ENCODE measurements at regions of chr9 and their contacts with region 1.

Region 1: DNA sequence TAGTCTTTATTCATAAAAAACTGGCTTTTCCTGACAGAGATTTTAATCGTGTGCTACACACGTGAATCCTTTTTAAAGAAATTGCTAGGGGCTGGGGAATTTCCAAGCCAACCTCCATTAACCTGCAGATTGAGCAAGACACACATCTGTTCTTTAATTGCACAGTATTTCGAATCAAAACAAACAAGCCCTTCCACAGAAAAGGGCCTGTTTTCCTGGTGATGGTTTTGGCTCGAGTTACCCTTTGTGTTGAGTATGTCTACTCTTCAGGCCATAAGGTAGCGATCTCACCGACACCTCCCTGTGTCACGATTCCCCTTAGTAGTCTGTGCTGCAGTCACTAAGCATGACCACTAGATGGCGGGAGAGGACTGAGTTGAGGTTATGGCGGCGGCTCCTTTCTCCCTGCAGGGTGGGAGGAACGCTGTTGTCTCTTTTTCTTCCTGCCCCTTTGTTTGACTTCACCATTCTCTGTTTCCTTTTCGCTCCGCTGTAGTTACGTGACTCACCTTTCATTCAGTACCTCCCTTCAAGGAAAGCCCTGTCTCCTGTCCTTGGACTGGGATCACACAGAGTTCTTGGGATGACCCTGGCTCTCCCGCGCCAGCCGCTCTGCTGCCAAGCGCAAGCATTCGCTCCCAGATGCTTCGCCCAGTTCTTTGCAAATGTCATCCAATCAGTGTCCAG is 137.1 kb upstream of the SLC24A2 start:
- DNase-seq: peak; percentile 80
- H3K4me3 Mint-ChIP-seq: peak overlapping the region; percentile 60
- H3K27ac Mint-ChIP-seq: no peak overlapping the region
- H3K4me1 Mint-ChIP-seq: no peaks in the 10 kb centered on the region
- H3K27me3 Mint-ChIP-seq: peaks cover 24% of the 10 kb centered on the region
- CTCF ChIP-seq: peak; percentile 95

Region 2: GRCh38 chr9:19493174-19493811 is 432.7 kb before region 1 on chr9:
- CTCF ChIA-PET with region 1: interaction called, 11 read pairs
- POLR2A ChIA-PET with region 1: interaction called, 3 read pairs
- intact Hi-C with region 1: loop called (anchors 1 kb)
- DNase-seq: peak; percentile 67
- H3K4me3 Mint-ChIP-seq: peak overlapping the region; percentile 72
- H3K27ac Mint-ChIP-seq: no peak overlapping the region
- H3K4me1 Mint-ChIP-seq: peaks cover 16% of the 10 kb centered on the region
- H3K27me3 Mint-ChIP-seq: peaks cover 19% of the 10 kb centered on the region
- CTCF ChIP-seq: peak; percentile 81

Region 3: GRCh38 chr9:20043035-20043434 is 117.1 kb after region 1 on chr9:
- CTCF ChIA-PET with region 1: no interaction called
- POLR2A ChIA-PET with region 1: no interaction called
- intact Hi-C with region 1: no loop called
- DNase-seq: no peak
- H3K4me3 Mint-ChIP-seq: no peak overlapping the region
- H3K27ac Mint-ChIP-seq: no peak overlapping the region
- H3K4me1 Mint-ChIP-seq: peaks cover 5% of the 10 kb centered on the region
- H3K27me3 Mint-ChIP-seq: no peaks in the 10 kb centered on the region
- CTCF ChIP-seq: no peak

Region 4: DNA sequence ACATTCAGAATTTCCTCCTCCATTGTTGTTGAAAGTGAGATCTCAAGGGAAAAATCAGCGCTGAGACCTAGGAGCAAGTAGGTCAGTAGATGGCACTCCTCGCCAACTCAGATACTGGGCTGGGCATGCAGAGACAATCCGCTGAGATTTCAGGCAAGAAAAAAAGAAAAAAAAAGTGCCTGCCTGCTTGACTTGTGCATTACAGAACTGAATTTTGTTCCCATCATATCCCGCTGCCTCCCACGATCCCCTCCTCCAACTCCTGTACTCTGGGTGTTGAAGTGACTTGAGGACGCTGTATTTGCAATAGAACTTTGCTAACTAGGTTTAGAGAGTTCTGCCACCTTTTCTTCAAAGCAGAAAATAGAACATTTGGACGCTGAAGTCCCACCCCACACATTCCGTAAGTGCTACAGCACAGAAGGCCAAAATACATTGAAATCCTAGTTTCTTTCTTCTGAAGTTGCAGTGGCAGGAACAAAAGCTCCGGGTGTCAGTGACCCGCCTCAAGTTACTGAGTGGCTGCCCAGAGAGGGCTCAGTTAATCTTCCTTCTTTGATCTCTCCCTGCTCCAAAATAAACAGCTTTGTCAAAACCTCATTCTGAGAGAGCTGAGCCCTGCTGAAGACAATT is 430.6 kb after region 1 on chr9:
- CTCF ChIA-PET with region 1: interaction called, 6 read pairs
- POLR2A ChIA-PET with region 1: no interaction called
- intact Hi-C with region 1: loop called (anchors 2 kb)
- DNase-seq: peak; percentile 70
- H3K4me3 Mint-ChIP-seq: no peak overlapping the region
- H3K27ac Mint-ChIP-seq: no peak overlapping the region
- H3K4me1 Mint-ChIP-seq: peaks cover 8% of the 10 kb centered on the region
- H3K27me3 Mint-ChIP-seq: no peaks in the 10 kb centered on the region
- CTCF ChIP-seq: peak; percentile 76

Region 5: GRCh38 chr9:20941174-20941690 is 1015.3 kb after region 1 on chr9:
- CTCF ChIA-PET with region 1: interaction called, 6 read pairs
- POLR2A ChIA-PET with region 1: interaction called, 3 read pairs
- intact Hi-C with region 1: loop called (anchors 2 kb)
- DNase-seq: peak; percentile 61
- H3K4me3 Mint-ChIP-seq: no peak overlapping the region
- H3K27ac Mint-ChIP-seq: no peak overlapping the region
- H3K4me1 Mint-ChIP-seq: no peaks in the 10 kb centered on the region
- H3K27me3 Mint-ChIP-seq: no peaks in the 10 kb centered on the region
- CTCF ChIP-seq: peak; percentile 53

Measured in MCF 10A (cell line).